CD8-positive, alpha-beta T cell (primary cell): ENCODE measurements at regions of chrX and their contacts with region 1.

Region 1: DNA sequence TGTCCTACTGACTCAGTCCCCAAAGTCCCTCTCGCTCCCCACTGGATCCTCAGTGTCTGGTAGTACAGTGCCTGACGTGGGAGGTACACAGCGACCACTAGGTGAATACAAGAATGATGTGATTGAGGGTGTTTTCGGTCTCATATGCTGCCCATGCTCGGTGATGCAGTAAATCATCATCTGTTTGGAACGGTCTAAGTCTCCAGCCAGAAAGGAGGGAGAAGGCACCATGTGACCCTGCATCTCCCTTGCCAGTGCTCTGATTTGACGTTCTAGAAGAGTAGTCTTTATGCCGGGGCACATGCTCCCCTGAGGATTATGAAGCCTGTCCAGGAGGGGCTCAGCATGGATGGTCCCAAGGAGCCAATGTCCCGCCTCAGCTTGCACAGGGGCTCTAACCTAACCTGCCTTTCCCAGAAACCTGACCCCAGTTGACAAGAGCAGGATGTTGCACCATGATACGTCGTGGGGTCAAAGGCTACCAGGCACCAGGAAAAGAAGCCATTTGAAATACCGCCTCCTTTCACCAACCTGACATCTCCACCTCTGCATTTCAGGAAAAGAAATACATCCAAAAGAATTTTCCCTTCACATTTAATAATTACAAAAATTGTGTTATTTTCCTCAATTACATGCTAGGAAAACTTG is 13.8 kb upstream of the PLXNB3 start:
- DNase-seq: no peak
- ATAC-seq: no peak
- H3K4me3 ChIP-seq: no peak overlapping the region
- H3K4me3 Mint-ChIP-seq: no peak overlapping the region
- H3K27ac ChIP-seq: no peak overlapping the region
- H3K27ac Mint-ChIP-seq: no peak overlapping the region
- H3K4me1 ChIP-seq: no peaks in the 10 kb centered on the region
- H3K4me1 Mint-ChIP-seq: no peaks in the 10 kb centered on the region
- H3K27me3 ChIP-seq: no peaks in the 10 kb centered on the region
- H3K27me3 Mint-ChIP-seq: no peaks in the 10 kb centered on the region
- CTCF ChIP-seq: no peak

Region 2: DNA sequence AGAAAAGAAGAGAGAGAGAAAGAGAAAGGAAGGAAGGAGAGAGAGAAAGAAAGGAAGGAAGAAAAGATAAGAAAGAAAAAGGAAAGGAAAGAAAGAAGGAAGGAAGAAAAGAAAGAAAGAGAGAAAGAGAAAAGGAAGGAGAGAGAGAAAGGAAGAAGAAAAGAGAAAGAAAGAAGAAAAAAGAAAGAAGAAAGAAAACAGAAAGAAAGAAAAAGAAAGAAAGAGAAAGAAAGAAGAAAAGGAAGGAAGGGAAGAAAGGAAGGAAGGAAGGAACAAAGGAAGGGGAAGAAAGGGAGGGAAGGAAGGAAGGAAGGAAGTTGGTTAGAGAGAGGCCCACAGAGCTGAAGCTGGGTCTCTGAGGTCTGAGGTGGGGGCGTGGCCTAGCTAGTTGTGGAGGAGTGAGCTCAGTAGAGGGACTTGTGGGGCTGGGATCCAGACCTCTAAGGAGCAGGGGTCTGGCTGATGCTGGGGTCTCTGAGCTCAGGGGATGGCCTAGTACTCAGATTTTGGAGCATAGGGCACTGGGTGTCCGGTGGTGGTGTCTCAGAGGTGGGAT is 107.2 kb after region 1 on chrX:
- CTCF ChIA-PET with region 1: no interaction called
- POLR2A ChIA-PET with region 1: no interaction called
- intact Hi-C with region 1: loop called in 1 of 2 experiments (anchors 10 kb)
- DNase-seq: peak in 1 of 9 experiments; percentile 25
- ATAC-seq: no peak
- H3K4me3 ChIP-seq: no peak overlapping the region
- H3K4me3 Mint-ChIP-seq: no peak overlapping the region
- H3K27ac ChIP-seq: no peak overlapping the region
- H3K27ac Mint-ChIP-seq: no peak overlapping the region
- H3K4me1 ChIP-seq: peaks cover 15% of the 10 kb centered on the region
- H3K4me1 Mint-ChIP-seq: peaks cover 14% of the 10 kb centered on the region
- H3K27me3 ChIP-seq: no peaks in the 10 kb centered on the region
- H3K27me3 Mint-ChIP-seq: peaks cover 5% of the 10 kb centered on the region
- CTCF ChIP-seq: no peak